ENCODE measurements at regions of chr1 and their contacts with region 1.

Region 1: GRCh38 chr1:36187800-36188593 is 32.0 kb downstream of the MAP7D1 start:
- DNase-seq: peak; percentile 57
- ATAC-seq: peak; percentile 100
- H3K4me3 ChIP-seq: no peak overlapping the region
- H3K27ac ChIP-seq: no peak overlapping the region
- H3K4me1 ChIP-seq: peaks cover 4% of the 10 kb centered on the region; the same call in 1 of the 2 replicates
- H3K27me3 ChIP-seq: no peaks in the 10 kb centered on the region
- CTCF ChIP-seq: peak; percentile 88 to 99 (median 93); a peak in 5 of 6 replicates
- EP300 ChIP-seq: no peak
- POLR2A ChIP-seq: no peak
- RAD21 ChIP-seq: peak; percentile 98

Region 2: GRCh38 chr1:36076979-36077573 is 110.9 kb before region 1 on chr1:
- CTCF ChIA-PET with region 1: no interaction called
- POLR2A ChIA-PET with region 1: no interaction called
- RAD21 ChIA-PET with region 1: no interaction called
- SMC1A ChIA-PET with region 1: no interaction called
- in situ Hi-C with region 1: no loop called
- intact Hi-C with region 1: no loop called
- DNase-seq: no peak
- ATAC-seq: no peak
- H3K4me3 ChIP-seq: no peak overlapping the region
- H3K27ac ChIP-seq: no peak overlapping the region
- H3K4me1 ChIP-seq: no peaks in the 10 kb centered on the region
- H3K27me3 ChIP-seq: no peaks in the 10 kb centered on the region
- CTCF ChIP-seq: no peak
- EP300 ChIP-seq: no peak
- POLR2A ChIP-seq: no peak
- RAD21 ChIP-seq: no peak

Region 3: DNA sequence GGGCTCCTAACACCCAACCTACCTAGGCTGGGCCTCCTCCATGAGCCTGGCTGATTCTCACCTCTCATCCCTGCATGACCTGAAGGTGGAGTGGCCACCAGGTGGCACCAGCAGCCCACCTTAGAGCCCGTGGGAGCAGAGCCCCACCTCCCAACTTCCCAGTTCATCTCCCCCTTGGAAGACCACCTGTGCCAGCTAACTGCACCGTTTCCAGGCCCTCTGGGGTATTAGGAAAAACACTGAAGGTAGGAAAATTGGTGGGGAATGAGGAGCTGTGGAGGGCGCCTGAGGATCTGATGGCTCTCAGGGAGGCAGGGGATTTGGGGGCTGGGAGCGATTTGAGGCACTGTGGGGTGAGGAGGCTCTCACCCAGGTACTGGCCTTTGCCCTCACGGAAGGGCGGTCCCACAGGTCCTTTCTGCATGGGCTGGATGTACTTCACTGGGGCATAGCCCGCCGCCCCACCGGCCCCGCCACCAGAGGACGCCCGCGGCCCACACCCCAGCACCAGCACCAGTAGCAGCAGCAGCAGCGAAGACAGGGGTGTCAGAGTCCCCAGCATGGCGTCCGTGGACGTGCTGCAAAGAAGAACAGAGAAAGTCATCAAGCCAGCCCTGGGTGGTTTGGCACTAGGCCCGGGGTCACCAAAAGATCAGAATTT is 88.2 kb before region 1 on chr1:
- CTCF ChIA-PET with region 1: interaction called, 18 read pairs
- POLR2A ChIA-PET with region 1: no interaction called
- RAD21 ChIA-PET with region 1: interaction called, 6 read pairs
- SMC1A ChIA-PET with region 1: interaction called, 9 read pairs
- in situ Hi-C with region 1: no loop called
- intact Hi-C with region 1: loop called (anchors 1 kb)
- DNase-seq: no peak
- ATAC-seq: peak; percentile 96
- H3K4me3 ChIP-seq: no peak overlapping the region
- H3K27ac ChIP-seq: no peak overlapping the region
- H3K4me1 ChIP-seq: no peaks in the 10 kb centered on the region
- H3K27me3 ChIP-seq: no peaks in the 10 kb centered on the region
- CTCF ChIP-seq: peak; percentile 82 to 88 (median 86)
- EP300 ChIP-seq: no peak
- POLR2A ChIP-seq: no peak
- RAD21 ChIP-seq: peak; percentile 95

Region 4: DNA sequence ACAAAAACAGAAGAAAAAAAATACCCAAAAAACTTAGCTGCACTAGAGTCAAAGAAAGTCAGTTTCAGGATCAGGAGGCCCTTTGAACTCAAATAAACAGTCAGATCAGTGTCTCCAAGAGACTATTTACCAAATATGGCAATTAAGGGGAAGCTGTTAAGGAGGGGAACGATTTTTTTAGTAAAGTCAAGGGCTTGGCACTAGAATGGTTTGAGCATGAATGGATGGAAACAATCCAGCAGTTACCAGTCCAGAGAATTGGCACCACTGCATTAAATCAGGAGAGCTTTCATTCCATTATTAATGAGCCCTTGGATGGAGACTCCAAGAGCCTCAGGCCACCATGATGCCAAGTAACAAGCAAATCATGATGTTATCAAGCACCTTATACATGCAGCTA is 45.9 kb before region 1 on chr1:
- CTCF ChIA-PET with region 1: interaction called, 19 read pairs
- POLR2A ChIA-PET with region 1: no interaction called
- RAD21 ChIA-PET with region 1: interaction called, 4 read pairs
- SMC1A ChIA-PET with region 1: interaction called, 5 read pairs
- in situ Hi-C with region 1: no loop called
- intact Hi-C with region 1: no loop called
- DNase-seq: no peak
- ATAC-seq: no peak
- H3K4me3 ChIP-seq: no peak overlapping the region
- H3K27ac ChIP-seq: no peak overlapping the region; the same call in 1 of the 2 replicates
- H3K4me1 ChIP-seq: peaks cover 18% of the 10 kb centered on the region
- H3K27me3 ChIP-seq: no peaks in the 10 kb centered on the region
- CTCF ChIP-seq: no peak
- EP300 ChIP-seq: no peak
- POLR2A ChIP-seq: no peak
- RAD21 ChIP-seq: no peak

Region 5: DNA sequence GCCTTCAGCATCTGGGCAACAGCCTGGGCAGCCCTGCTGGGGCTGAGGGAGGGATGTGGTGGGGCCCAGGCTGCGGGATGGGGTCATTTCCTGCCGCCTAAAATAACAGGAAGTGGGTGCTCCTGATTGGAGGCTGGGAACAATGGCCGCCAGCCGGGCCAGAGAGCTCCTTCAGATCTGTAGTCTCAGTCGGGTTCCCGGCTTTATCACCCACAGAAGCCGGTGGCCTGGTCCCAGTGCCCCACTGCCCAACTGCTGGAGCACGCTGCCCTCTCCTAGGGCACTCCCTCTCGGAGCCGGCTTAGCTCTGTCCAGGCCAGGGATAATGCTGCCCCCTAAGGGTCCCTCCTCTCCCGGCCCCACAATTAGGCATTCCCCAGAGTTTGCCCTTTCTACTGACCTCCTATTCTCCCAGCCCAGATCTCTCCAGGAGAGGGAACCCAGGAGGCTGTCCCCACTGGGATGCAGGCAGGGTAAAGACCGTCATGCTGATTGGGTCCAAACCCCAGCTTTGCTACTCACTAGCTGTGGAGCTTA is 27.0 kb before region 1 on chr1:
- CTCF ChIA-PET with region 1: interaction called, 262 read pairs
- POLR2A ChIA-PET with region 1: interaction called, 12 read pairs
- RAD21 ChIA-PET with region 1: interaction called, 33 read pairs
- SMC1A ChIA-PET with region 1: interaction called, 67 read pairs
- in situ Hi-C with region 1: no loop called
- intact Hi-C with region 1: no loop called
- DNase-seq: no peak
- ATAC-seq: peak; percentile 76
- H3K4me3 ChIP-seq: peak overlapping the region; percentile 85
- H3K27ac ChIP-seq: peak overlapping the region; percentile 95
- H3K4me1 ChIP-seq: peaks cover 51% of the 10 kb centered on the region
- H3K27me3 ChIP-seq: no peaks in the 10 kb centered on the region
- CTCF ChIP-seq: peak; percentile 32 to 49 (median 44); a peak in 3 of 6 replicates
- EP300 ChIP-seq: no peak
- POLR2A ChIP-seq: peak; percentile 82
- RAD21 ChIP-seq: no peak

Region 6: GRCh38 chr1:36223993-36224536 is 36.1 kb after region 1 on chr1 and contains the start of gene THRAP3:
- CTCF ChIA-PET with region 1: interaction called, 21 read pairs
- POLR2A ChIA-PET with region 1: interaction called, 11 read pairs
- RAD21 ChIA-PET with region 1: interaction called, 3 read pairs
- SMC1A ChIA-PET with region 1: interaction called, 10 read pairs
- in situ Hi-C with region 1: no loop called
- intact Hi-C with region 1: no loop called
- DNase-seq: peak; percentile 97
- ATAC-seq: peak; percentile 95
- H3K4me3 ChIP-seq: peak within 1 kb of the TSS; percentile 95
- H3K27ac ChIP-seq: peak within 1 kb of the TSS; percentile 88
- H3K4me1 ChIP-seq: peaks cover 7% of the 10 kb centered on the region; the same call in 1 of the 2 replicates
- H3K27me3 ChIP-seq: no peaks in the 10 kb centered on the region
- CTCF ChIP-seq: no peak
- EP300 ChIP-seq: 0 out of 4 replicates have a peak, but pooled peaks of 1 of the 2 experiments have one; percentile 17
- POLR2A ChIP-seq: peak; percentile 91
- RAD21 ChIP-seq: no peak
- polyA plus RNA-seq, gene THRAP3: 76.3 to 173 TPM

Region 7: GRCh38 chr1:36420836-36421664 is 233.1 kb after region 1 on chr1:
- CTCF ChIA-PET with region 1: interaction called, 15 read pairs
- POLR2A ChIA-PET with region 1: no interaction called
- RAD21 ChIA-PET with region 1: interaction called, 5 read pairs
- SMC1A ChIA-PET with region 1: interaction called, 3 read pairs
- in situ Hi-C with region 1: no loop called
- intact Hi-C with region 1: no loop called
- DNase-seq: peak; percentile 74
- ATAC-seq: peak; percentile 100
- H3K4me3 ChIP-seq: no peak overlapping the region
- H3K27ac ChIP-seq: peak overlapping the region; percentile 31; the same call in 1 of the 2 replicates
- H3K4me1 ChIP-seq: peaks cover 6% of the 10 kb centered on the region; the same call in 1 of the 2 replicates
- H3K27me3 ChIP-seq: no peaks in the 10 kb centered on the region
- CTCF ChIP-seq: peak; percentile 95 to 98 (median 96); a peak in 5 of 6 replicates
- EP300 ChIP-seq: no peak
- POLR2A ChIP-seq: no peak
- RAD21 ChIP-seq: peak; percentile 97